ENCODE measurements at regions of chr17 and their contacts with region 1.

Region 1: GRCh38 chr17:41648411-41649195 is 24.2 kb upstream of the KRT17 start:
- DNase-seq: no peak
- H3K4me3 ChIP-seq: peak overlapping the region; percentile 40 to 47
- H3K27ac ChIP-seq: peak overlapping the region; percentile 87
- H3K4me1 ChIP-seq: peaks cover 52% of the 10 kb centered on the region
- H3K27me3 ChIP-seq: no peaks in the 10 kb centered on the region
- CTCF ChIP-seq: peak; percentile 87 to 98 (median 94)
- POLR2A ChIP-seq: no peak

Region 2: DNA sequence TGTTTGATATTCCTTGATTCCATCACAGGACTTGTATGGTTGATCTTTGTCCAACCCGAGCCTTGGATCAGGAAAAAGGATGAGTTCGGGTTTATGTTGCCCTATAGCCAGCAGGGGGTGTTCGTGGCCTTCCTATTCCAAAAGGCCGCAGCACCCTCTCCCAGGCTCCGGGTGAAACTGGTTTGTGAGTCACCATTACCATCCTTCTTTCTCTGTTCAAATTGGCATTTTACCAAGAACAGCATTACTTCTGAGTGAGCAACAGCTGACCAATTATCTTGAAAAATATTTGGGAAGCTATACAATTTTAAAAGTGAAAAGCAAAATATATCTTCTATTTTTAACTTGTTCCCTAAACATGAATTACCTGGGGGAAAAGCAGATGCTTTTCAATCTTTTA is 739.3 kb before region 1 on chr17:
- intact Hi-C with region 1: loop called (anchors 5 kb)
- DNase-seq: peak in 1 of 2 donors; percentile 94
- H3K4me3 ChIP-seq: no peak overlapping the region
- H3K27ac ChIP-seq: peak overlapping the region; percentile 91
- H3K4me1 ChIP-seq: peaks cover 37% of the 10 kb centered on the region
- H3K27me3 ChIP-seq: no peaks in the 10 kb centered on the region
- CTCF ChIP-seq: peak; percentile 60 to 91 (median 65)
- POLR2A ChIP-seq: no peak

Region 3: DNA sequence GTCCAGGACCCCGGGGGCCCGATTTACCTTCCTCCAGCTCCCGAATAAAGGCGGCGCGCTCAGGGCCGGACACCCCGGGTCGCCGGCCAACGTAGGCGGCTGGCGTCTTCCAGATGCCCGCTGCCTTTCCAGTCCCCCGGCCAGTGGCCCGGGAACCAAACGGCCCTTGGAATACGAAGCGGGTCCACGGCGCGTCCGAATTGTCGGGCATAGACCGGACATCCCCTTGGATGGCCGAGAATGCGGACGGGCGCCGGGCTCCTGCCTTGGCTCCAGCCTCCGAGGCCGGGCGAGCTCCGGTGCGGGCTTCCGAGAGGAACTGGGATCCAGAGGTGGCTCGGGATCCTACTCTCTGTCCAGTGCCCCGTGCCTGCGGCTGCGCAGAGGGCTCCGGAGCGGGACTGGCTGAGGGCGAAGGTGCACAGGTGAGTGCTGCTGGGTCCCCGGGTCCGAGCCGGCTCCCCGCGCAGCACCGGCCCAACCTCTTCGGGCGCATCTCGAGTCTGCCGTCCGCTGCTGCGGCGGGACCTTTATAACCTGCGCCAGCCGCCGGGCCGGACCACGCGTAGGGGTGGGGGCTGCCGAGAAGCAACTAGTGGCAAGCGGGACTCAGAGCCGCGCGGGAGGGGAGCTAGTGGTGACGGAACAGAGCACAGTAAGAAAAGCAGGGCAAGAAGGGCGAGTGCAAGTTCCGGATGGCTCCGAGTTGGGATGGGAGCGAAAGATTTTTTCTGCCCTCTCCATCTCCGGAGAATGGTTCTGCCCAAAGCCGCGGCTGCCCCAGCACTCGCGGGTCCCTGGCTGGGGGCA is 85.7 kb after region 1 on chr17 and contains the start of gene HAP1:
- intact Hi-C with region 1: no loop called
- DNase-seq: no peak
- H3K4me3 ChIP-seq: peak within 1 kb of the TSS; percentile 49 to 61
- H3K27ac ChIP-seq: no peak within 1 kb of the TSS
- H3K4me1 ChIP-seq: peaks cover 24% of the 10 kb centered on the region
- H3K27me3 ChIP-seq: no peaks in the 10 kb centered on the region
- CTCF ChIP-seq: no peak
- POLR2A ChIP-seq: peak in 1 of 2 donors; percentile 54
- total RNA-seq, gene HAP1: 1.2 TPM

Measured in vagina (tissue), 2 donors.